ENCODE measurements at regions of chrX and their contacts with region 1.

Region 1: DNA sequence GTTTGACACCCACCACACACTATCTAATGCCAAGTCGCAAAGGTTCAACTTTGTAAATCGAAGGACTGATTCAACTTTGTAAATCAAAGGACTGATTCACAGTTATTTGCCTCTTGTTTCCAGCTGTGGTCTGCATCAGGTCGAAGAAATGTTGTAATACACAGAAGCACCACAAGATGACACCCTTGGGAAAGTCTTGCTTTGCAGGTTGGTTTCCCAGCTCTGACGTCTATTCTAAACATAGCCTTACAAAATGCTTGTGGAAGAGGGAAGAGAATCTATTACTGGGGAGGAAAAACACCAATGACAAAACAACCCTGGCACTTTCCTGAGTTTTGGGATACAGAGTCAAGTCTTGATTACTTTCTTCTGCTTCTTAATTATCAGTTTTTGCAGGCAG is 35.3 kb downstream of the SUPT20HL1 start:
- DNase-seq: peak; percentile 53
- H3K4me3 Mint-ChIP-seq: no peak overlapping the region
- H3K27ac Mint-ChIP-seq: no peak overlapping the region
- H3K4me1 Mint-ChIP-seq: peaks cover 2% of the 10 kb centered on the region
- H3K27me3 Mint-ChIP-seq: peaks cover 21% of the 10 kb centered on the region

Region 2: GRCh38 chrX:24412637-24413363 is 17.0 kb after region 1 on chrX:
- CTCF ChIA-PET with region 1: no interaction called
- DNase-seq: no peak
- H3K4me3 Mint-ChIP-seq: no peak overlapping the region
- H3K27ac Mint-ChIP-seq: no peak overlapping the region
- H3K4me1 Mint-ChIP-seq: no peaks in the 10 kb centered on the region
- H3K27me3 Mint-ChIP-seq: peaks cover 12% of the 10 kb centered on the region

Region 3: GRCh38 chrX:24498975-24499374 is 103.2 kb after region 1 on chrX:
- CTCF ChIA-PET with region 1: interaction called, 94 read pairs
- DNase-seq: no peak
- H3K4me3 Mint-ChIP-seq: no peak overlapping the region
- H3K27ac Mint-ChIP-seq: peak overlapping the region; percentile 83
- H3K4me1 Mint-ChIP-seq: peaks cover 31% of the 10 kb centered on the region
- H3K27me3 Mint-ChIP-seq: no peaks in the 10 kb centered on the region

Region 4: GRCh38 chrX:24561121-24561520 is 165.3 kb after region 1 on chrX:
- CTCF ChIA-PET with region 1: interaction called, 10 read pairs
- DNase-seq: no peak
- H3K4me3 Mint-ChIP-seq: no peak overlapping the region
- H3K27ac Mint-ChIP-seq: no peak overlapping the region
- H3K4me1 Mint-ChIP-seq: no peaks in the 10 kb centered on the region
- H3K27me3 Mint-ChIP-seq: no peaks in the 10 kb centered on the region

Measured in activated naive CD4-positive, alpha-beta T cell treated with anti-CD3 and anti-CD28 coated beads, Interleukin-2, amount 10 ng/mL, durations not matched to agents 7 days and 5 days (primary cell).